Activated CD8-positive, alpha-beta T cell treated with anti-CD3 and anti-CD28 coated beads for 36 hours (primary cell): ENCODE measurements at regions of chr6 and their contacts with region 1.

Region 1: GRCh38 chr6:119129148-119129967 is 50.9 kb upstream of the FAM184A start:
- DNase-seq: peak; percentile 13
- ATAC-seq: peak; percentile 80
- H3K4me3 Mint-ChIP-seq: no peak overlapping the region
- H3K27ac Mint-ChIP-seq: no peak overlapping the region
- H3K4me1 Mint-ChIP-seq: peaks cover 7% of the 10 kb centered on the region
- H3K27me3 Mint-ChIP-seq: peaks cover 2% of the 10 kb centered on the region
- CTCF ChIP-seq: peak; percentile 80

Region 2: DNA sequence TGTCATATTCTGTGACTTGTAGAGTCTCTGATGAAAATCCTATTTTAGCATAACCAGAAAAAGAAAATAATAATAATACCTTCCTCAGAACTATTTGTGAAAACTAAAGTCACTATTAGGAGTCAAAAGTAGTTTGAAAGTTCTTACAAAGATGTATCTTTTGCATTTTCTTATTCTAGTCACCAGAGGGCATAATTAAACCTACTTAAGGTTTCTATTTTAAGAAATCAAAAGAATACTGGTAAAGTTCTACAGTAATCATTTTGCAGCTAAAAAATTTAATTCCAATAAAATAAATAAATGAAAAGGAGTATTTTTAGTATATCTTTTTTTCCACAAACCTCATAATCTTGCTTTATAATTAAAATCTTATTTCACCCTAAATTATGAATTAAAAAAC is 166.4 kb before region 1 on chr6:
- CTCF ChIA-PET with region 1: interaction called, 11 read pairs
- POLR2A ChIA-PET with region 1: no interaction called
- intact Hi-C with region 1: no loop called
- DNase-seq: no peak
- ATAC-seq: no peak
- H3K4me3 Mint-ChIP-seq: no peak overlapping the region
- H3K27ac Mint-ChIP-seq: no peak overlapping the region
- H3K4me1 Mint-ChIP-seq: peaks cover 9% of the 10 kb centered on the region
- H3K27me3 Mint-ChIP-seq: no peaks in the 10 kb centered on the region
- CTCF ChIP-seq: peak; percentile 48

Region 3: DNA sequence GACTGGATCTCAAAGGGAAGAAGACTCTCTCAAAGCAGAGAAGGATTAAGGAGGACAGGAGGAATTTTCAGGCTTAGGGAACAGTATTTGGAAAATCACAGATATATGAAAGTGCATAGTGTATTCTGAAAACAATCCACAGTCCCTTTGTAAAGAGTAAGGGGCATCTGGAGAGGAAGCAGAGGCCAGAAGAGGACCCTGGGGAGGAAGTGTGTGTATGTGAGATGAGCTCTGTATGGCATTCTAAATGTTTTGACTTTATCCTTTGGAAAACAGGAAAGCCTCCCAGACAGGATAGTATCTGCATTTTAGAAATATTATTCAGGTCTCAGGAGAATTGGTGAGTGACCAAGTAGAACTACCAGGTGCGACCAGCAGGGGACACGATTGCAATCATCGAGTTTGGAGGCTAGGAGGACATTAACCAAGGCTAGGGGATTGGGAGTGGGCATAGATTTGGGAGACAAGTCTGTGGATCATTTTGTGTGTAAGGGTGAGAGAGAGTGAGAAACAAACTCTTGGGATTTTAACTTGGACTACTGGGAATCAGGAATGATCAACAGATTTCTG is 12.6 kb before region 1 on chr6:
- CTCF ChIA-PET with region 1: interaction called, 12 read pairs
- POLR2A ChIA-PET with region 1: no interaction called
- intact Hi-C with region 1: no loop called
- DNase-seq: peak; percentile 39
- ATAC-seq: no peak
- H3K4me3 Mint-ChIP-seq: no peak overlapping the region
- H3K27ac Mint-ChIP-seq: no peak overlapping the region
- H3K4me1 Mint-ChIP-seq: no peaks in the 10 kb centered on the region
- H3K27me3 Mint-ChIP-seq: peaks cover 4% of the 10 kb centered on the region
- CTCF ChIP-seq: peak; percentile 56

Region 4: GRCh38 chr6:119147101-119148053 is 18.0 kb after region 1 on chr6:
- CTCF ChIA-PET with region 1: interaction called, 29 read pairs
- POLR2A ChIA-PET with region 1: interaction called, 3 read pairs
- intact Hi-C with region 1: no loop called
- DNase-seq: peak; percentile 87
- ATAC-seq: peak; percentile 94
- H3K4me3 Mint-ChIP-seq: no peak overlapping the region
- H3K27ac Mint-ChIP-seq: peak overlapping the region; percentile 78
- H3K4me1 Mint-ChIP-seq: peaks cover 36% of the 10 kb centered on the region
- H3K27me3 Mint-ChIP-seq: peaks cover under 1% of the 10 kb centered on the region
- CTCF ChIP-seq: no peak

Region 5: GRCh38 chr6:119313937-119314884 is 184.9 kb after region 1 on chr6:
- CTCF ChIA-PET with region 1: interaction called, 12 read pairs
- POLR2A ChIA-PET with region 1: no interaction called
- intact Hi-C with region 1: no loop called
- DNase-seq: peak; percentile 63
- ATAC-seq: peak; percentile 74
- H3K4me3 Mint-ChIP-seq: peak overlapping the region; percentile 66
- H3K27ac Mint-ChIP-seq: peak overlapping the region; percentile 94
- H3K4me1 Mint-ChIP-seq: peaks cover 58% of the 10 kb centered on the region
- H3K27me3 Mint-ChIP-seq: no peaks in the 10 kb centered on the region
- CTCF ChIP-seq: no peak